Posterior cingulate gyrus (tissue), 11 donors: ENCODE measurements at regions of chr2 and their contacts with region 1.

Region 1: GRCh38 chr2:192194866-192195547 is at the start of gene TMEFF2:
- DNase-seq: peak; percentile 99 to 100 (median 100)

Region 2: DNA sequence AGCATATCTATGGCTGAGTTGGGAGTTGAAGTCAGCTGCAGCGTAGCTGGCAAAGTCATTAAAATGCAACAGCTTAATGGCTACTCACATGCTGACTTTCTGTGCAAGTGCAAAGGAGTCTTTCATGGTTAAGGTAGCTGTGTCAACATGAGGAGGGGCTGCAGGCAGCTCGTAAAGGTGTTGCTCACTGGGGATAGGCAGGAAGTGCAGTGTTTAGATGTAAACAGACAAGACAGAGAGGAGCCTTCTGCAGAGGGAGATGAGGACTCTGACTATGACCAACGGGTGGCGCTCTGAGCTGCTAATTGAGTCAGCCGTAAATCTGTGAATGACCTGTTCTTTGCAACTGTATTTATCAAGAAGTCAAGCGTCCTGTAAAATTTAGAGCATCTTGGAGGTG is 325.8 kb before region 1 on chr2:
- intact Hi-C with region 1: loop called (anchors 10 kb)
- DNase-seq: peak in 7 of 10 donors; percentile 24 to 92 (median 64)

Region 3: GRCh38 chr2:192016265-192016664 is 178.7 kb before region 1 on chr2:
- intact Hi-C with region 1: no loop called
- DNase-seq: no peak

Region 4: DNA sequence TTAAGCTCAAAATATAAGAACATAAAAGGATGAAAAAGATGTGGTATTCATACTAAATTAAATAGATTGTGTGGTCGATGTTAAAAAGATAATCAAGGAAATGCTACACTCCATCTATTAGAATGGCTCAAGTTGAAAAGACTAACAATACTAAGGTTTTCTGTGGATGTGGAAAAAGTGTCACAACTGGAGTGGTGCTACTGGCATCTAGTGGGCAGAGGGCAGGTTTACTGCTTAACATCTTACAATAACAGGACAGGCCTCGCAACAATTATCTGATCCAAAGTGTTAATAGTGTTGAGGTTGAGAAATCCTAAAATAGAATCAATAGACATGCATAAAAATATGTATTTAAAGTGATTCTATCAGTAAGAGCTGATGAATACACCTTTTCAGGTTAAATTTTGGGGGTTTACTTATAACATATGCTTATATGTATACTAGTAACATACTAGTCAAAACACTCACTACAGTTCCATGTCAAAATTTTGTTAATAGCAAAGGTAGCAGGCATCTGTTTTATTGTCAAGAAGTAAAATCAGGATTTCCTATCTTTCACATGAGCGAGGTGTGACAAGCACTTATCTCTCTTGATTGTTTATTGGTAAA is 91.2 kb after region 1 on chr2:
- intact Hi-C with region 1: loop called (anchors 2 kb)
- DNase-seq: peak in 6 of 10 donors; percentile 4 to 81 (median 30)